ENCODE measurements at regions of chr10 and their contacts with region 1.

Region 1: GRCh38 chr10:11113156-11113555 is 95.5 kb downstream of the CELF2 start:
- DNase-seq: peak; percentile 20
- ATAC-seq: peak; percentile 97
- H3K4me3 ChIP-seq: no peak overlapping the region
- H3K27ac ChIP-seq: no peak overlapping the region
- H3K4me1 ChIP-seq: no peaks in the 10 kb centered on the region
- H3K27me3 ChIP-seq: no peaks in the 10 kb centered on the region
- CTCF ChIP-seq: peak; percentile 58 to 70 (median 59); a peak in 5 of 6 replicates
- EP300 ChIP-seq: no peak
- POLR2A ChIP-seq: no peak
- RAD21 ChIP-seq: peak; percentile 81

Region 2: GRCh38 chr10:11097686-11098085 is 15.5 kb before region 1 on chr10:
- CTCF ChIA-PET with region 1: interaction called, 16 read pairs
- POLR2A ChIA-PET with region 1: no interaction called
- RAD21 ChIA-PET with region 1: no interaction called
- SMC1A ChIA-PET with region 1: interaction called, 5 read pairs
- in situ Hi-C with region 1: no loop called
- intact Hi-C with region 1: no loop called
- DNase-seq: peak; percentile 36
- ATAC-seq: peak; percentile 92
- H3K4me3 ChIP-seq: no peak overlapping the region
- H3K27ac ChIP-seq: no peak overlapping the region
- H3K4me1 ChIP-seq: peaks cover 7% of the 10 kb centered on the region; the same call in 1 of the 2 replicates
- H3K27me3 ChIP-seq: no peaks in the 10 kb centered on the region
- CTCF ChIP-seq: no peak
- EP300 ChIP-seq: no peak
- POLR2A ChIP-seq: no peak
- RAD21 ChIP-seq: no peak

Region 3: DNA sequence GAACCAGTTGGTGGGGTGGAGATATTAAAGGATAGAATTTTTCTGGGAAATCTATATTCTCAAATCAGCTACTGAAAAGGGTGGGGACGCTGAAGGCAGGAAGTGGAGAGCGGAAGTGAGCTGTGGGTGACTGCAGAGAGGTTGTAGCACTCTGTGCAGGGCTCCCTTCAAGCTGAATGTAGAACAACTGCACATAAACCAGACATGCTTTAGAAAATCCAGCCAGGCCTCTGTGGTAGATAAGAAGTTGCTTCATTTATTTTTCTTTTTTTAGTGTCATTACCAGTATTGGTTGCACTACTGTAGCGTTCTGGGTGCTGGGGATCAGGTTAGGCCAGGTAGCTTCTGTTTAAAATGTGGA is 32.3 kb after region 1 on chr10:
- CTCF ChIA-PET with region 1: interaction called, 8 read pairs
- POLR2A ChIA-PET with region 1: no interaction called
- RAD21 ChIA-PET with region 1: interaction called, 12 read pairs
- SMC1A ChIA-PET with region 1: interaction called, 7 read pairs
- in situ Hi-C with region 1: no loop called
- intact Hi-C with region 1: no loop called
- DNase-seq: no peak
- ATAC-seq: peak; percentile 92
- H3K4me3 ChIP-seq: peak overlapping the region; percentile 25; the same call in 1 of the 2 replicates
- H3K27ac ChIP-seq: peak overlapping the region; percentile 68
- H3K4me1 ChIP-seq: peaks cover 16% of the 10 kb centered on the region
- H3K27me3 ChIP-seq: no peaks in the 10 kb centered on the region
- CTCF ChIP-seq: no peak
- EP300 ChIP-seq: no peak
- POLR2A ChIP-seq: peak; percentile 25; the same call in 1 of the 2 replicates
- RAD21 ChIP-seq: no peak

Region 4: DNA sequence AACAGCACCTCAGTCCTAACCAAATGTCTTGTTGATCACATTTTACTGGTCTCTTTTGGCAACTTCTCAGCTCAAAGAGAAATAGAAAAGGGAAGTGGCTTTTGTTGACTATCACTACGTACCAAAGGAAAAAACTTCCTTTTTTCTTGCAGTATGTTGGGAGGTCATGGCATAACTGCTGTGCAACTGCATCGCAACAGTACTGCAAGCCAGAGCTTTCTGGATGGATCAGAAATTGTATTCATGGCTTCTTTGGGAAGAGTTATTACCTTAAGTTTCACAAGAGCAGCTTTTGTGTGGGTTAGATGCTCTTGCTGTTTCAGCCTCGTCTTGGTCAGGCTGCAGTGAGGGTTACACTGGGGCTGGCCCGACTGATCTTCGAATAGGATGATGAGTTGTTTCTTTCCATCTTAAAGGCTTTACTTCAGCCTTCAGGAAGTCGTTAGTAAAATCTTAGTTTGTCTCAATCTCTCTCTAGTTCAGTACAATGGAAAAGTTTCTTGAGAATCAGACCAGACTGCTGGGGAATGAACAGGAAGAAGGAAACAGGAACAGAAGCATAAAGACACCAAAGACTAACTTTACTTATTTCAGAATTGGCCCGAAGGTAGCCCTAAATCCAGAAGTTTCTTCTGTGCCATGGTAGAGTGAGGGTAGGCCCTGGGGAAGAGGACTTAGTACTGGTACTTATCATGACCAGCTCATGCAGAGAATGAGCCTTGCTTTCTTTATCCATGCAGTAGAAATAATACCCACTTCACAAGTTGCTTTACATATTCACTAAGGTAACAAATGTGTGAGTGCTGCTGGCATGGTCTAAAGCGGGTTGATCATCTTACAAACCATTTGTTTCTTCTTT is 58.1 kb after region 1 on chr10:
- CTCF ChIA-PET with region 1: interaction called, 10 read pairs
- POLR2A ChIA-PET with region 1: no interaction called
- RAD21 ChIA-PET with region 1: interaction called, 31 read pairs
- SMC1A ChIA-PET with region 1: interaction called, 13 read pairs
- in situ Hi-C with region 1: no loop called
- intact Hi-C with region 1: loop called (anchors 1 kb)
- DNase-seq: no peak
- ATAC-seq: peak; percentile 23
- H3K4me3 ChIP-seq: peak overlapping the region; percentile 96
- H3K27ac ChIP-seq: peak overlapping the region; percentile 95
- H3K4me1 ChIP-seq: peaks cover 26% of the 10 kb centered on the region
- H3K27me3 ChIP-seq: no peaks in the 10 kb centered on the region
- CTCF ChIP-seq: no peak
- EP300 ChIP-seq: 0 out of 4 replicates have a peak, but pooled peaks of 1 of the 2 experiments have one; percentile 14
- POLR2A ChIP-seq: peak; percentile 33; the same call in 1 of the 2 replicates
- RAD21 ChIP-seq: no peak

Region 5: DNA sequence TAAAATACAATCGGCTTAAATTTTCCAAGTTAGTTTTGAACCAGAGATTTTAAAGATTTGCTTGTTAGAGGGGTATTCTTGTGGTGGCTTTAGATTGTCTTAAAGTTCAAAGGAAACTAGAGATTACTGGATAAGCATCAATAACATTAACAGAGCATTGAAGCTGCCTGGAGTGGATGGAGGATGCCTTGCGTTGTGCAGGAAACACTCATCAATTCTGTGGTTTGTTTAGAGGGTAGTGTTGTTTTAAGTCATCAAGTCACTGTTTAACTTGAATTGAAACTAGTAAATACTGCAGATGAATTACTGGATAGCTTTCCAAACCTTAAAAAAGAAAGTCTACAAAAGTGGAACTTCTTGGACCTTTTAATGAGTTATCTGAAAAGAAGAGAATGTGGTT is 123.1 kb after region 1 on chr10:
- CTCF ChIA-PET with region 1: interaction called, 7 read pairs
- POLR2A ChIA-PET with region 1: no interaction called
- RAD21 ChIA-PET with region 1: interaction called, 14 read pairs
- SMC1A ChIA-PET with region 1: interaction called, 16 read pairs
- in situ Hi-C with region 1: no loop called
- intact Hi-C with region 1: no loop called
- DNase-seq: no peak
- ATAC-seq: peak; percentile 69
- H3K4me3 ChIP-seq: peak overlapping the region; percentile 36; the same call in 1 of the 2 replicates
- H3K27ac ChIP-seq: peak overlapping the region; percentile 74
- H3K4me1 ChIP-seq: peaks cover 71% of the 10 kb centered on the region
- H3K27me3 ChIP-seq: no peaks in the 10 kb centered on the region
- CTCF ChIP-seq: 0 out of 6 replicates have a peak, but pooled peaks of 1 of the 3 experiments have one; percentile 2
- EP300 ChIP-seq: peak in 1 of 2 experiments; percentile 63; a peak in 1 of 4 replicates
- POLR2A ChIP-seq: no peak
- RAD21 ChIP-seq: no peak

Region 6: GRCh38 chr10:11472158-11472753 is 359.1 kb after region 1 on chr10:
- CTCF ChIA-PET with region 1: interaction called, 3 read pairs
- POLR2A ChIA-PET with region 1: no interaction called
- RAD21 ChIA-PET with region 1: interaction called, 3 read pairs
- SMC1A ChIA-PET with region 1: no interaction called
- in situ Hi-C with region 1: loop called (anchors 25 kb)
- intact Hi-C with region 1: loop called (anchors 5 kb)
- DNase-seq: no peak
- ATAC-seq: peak; percentile 99
- H3K4me3 ChIP-seq: no peak overlapping the region
- H3K27ac ChIP-seq: no peak overlapping the region
- H3K4me1 ChIP-seq: no peaks in the 10 kb centered on the region
- H3K27me3 ChIP-seq: no peaks in the 10 kb centered on the region
- CTCF ChIP-seq: peak; percentile 88 to 91 (median 90)
- EP300 ChIP-seq: no peak
- POLR2A ChIP-seq: no peak
- RAD21 ChIP-seq: peak; percentile 96